ENCODE measurements at regions of chr7 and their contacts with region 1.

Region 1: GRCh38 chr7:36272567-36273269 is 116.9 kb upstream of the ANLN start:
- DNase-seq: peak in 1 of 2 experiments; percentile 87
- H3K4me3 ChIP-seq: no peak overlapping the region
- H3K27ac ChIP-seq: peak overlapping the region; percentile 60
- H3K4me1 ChIP-seq: peaks cover 25% of the 10 kb centered on the region
- H3K27me3 ChIP-seq: no peaks in the 10 kb centered on the region
- CTCF ChIP-seq: no peak

Region 2: DNA sequence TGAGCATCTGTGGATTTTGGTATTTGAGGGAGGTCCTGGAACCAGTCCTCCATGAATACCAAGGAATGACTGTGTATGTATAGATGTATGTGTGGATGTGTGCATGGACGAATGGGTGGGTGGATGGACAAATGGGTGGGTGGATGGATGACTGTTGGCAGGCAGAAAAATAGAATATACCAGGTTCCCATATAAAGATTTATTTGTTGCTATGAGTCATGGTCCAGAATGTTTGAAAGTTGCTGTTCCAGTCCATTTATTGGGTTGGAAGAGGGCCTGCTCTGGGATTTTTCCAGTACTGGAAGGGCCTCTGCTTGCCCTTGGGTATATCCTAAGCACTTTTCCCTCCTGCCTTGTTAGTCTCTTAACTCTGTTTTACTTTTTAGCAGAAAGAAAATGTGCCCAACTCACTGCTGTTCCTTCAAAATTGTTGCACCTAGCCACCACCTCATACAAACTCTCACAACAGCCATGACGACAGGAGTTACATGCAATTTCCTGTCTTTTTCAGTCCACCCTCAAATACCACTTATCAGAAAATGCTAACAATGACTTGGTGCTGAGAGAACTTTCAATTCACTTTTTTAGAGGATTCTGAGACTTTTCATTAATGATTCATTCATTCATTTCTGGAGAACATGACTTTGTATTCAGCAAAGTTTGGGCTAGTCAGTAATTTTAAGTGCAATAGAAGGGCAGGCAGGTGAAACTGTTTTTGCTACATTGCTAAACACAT is 11.5 kb before region 1 on chr7:
- CTCF ChIA-PET with region 1: no interaction called
- POLR2A ChIA-PET with region 1: interaction called, 17 read pairs
- intact Hi-C with region 1: no loop called
- DNase-seq: no peak
- H3K4me3 ChIP-seq: no peak overlapping the region
- H3K27ac ChIP-seq: no peak overlapping the region
- H3K4me1 ChIP-seq: peaks cover 37% of the 10 kb centered on the region
- H3K27me3 ChIP-seq: no peaks in the 10 kb centered on the region
- CTCF ChIP-seq: no peak

Region 3: DNA sequence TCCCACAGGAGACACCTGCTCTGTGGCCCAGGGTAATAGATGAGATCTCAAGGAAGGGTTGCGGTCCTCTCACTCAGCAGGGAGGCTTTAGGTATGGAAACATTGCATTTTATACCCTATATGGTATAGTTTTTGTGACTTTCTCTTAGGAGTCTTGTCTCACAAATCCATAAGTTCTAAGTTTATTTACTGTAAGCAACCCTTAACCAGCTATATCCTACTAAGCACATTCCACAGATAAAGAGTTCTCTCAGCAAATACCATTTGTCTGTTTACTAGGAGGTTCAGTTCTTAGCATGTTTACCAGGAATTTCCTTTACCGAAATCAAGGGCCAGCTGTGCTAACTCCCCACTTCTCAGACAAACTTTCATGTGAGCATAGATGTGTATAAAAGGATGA is 183.8 kb after region 1 on chr7:
- CTCF ChIA-PET with region 1: no interaction called
- POLR2A ChIA-PET with region 1: no interaction called
- intact Hi-C with region 1: no loop called
- DNase-seq: no peak
- H3K4me3 ChIP-seq: no peak overlapping the region
- H3K27ac ChIP-seq: no peak overlapping the region
- H3K4me1 ChIP-seq: no peaks in the 10 kb centered on the region
- H3K27me3 ChIP-seq: no peaks in the 10 kb centered on the region
- CTCF ChIP-seq: no peak